T-cell (primary cell): ENCODE measurements at regions of chr3 and their contacts with region 1.

Region 1: DNA sequence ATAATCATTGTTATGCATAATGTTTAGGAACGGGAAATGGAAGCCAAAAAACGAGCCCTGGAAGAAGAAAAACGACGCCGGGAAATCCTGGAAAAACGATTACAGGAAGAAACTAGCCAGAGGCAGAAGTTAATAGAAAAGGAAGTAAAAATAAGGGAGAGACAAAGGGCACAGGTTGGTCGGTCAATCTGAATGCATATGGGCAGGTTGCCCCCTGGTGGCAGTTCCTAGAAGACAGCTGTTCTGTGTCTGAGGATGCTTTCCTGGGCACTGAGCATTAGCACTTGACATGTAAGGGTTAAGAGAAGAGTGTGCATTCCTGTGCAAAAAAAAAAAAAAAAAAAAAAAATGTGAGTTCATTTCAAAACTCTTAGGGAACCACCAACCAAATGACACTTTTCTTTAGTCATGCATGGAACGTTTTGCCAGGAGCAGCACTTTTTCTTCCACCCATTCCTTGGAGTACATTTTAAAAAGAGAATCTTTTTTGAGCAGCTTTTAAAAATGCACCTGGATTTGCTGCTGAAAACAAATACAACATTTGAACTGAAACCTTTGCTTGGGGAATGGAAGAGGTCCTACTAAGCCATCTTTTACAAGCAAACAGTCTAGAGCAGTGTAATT is 11.1 kb upstream of the ABHD10 start:
- DNase-seq: peak; percentile 38 to 87 (median 68)
- ATAC-seq: peak; percentile 75 to 85 (median 82)
- H3K4me3 ChIP-seq: no peak overlapping the region
- H3K4me3 Mint-ChIP-seq: no peak overlapping the region
- H3K27ac ChIP-seq: no peak overlapping the region
- H3K27ac Mint-ChIP-seq: no peak overlapping the region
- H3K4me1 ChIP-seq: no peaks in the 10 kb centered on the region
- H3K4me1 Mint-ChIP-seq: peaks cover 3 to 11% (median 10%) of the 10 kb centered on the region in 3 donors
- H3K27me3 ChIP-seq: no peaks in the 10 kb centered on the region
- H3K27me3 Mint-ChIP-seq: no peaks in the 10 kb centered on the region

Region 2: DNA sequence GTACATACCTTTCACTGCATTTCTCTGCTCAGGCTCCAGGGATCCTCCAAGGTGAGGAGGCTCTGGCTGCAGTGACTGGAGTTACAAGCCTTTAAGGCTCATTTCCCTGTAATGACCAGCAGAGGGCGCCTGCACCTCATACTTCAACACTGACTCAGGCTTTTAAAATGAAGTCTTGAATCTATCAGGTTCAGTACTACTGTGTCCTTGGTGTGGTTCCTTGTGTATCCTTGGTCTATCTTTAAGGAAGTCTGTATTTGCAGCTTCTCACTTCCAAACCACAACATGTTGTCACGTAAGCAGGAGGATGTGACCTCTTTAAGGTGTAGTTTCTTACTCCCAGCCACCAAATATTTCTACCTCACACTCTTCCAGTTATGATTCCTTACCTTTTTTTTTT is 250.2 kb before region 1 on chr3:
- CTCF ChIA-PET with region 1: interaction called, 73 to 149 read pairs
- POLR2A ChIA-PET with region 1: interaction called in 1 of 2 experiments, 3 read pairs
- DNase-seq: peak; percentile 39 to 84 (median 56)
- ATAC-seq: peak; percentile 87 to 89 (median 88)
- H3K4me3 ChIP-seq: no peak overlapping the region
- H3K4me3 Mint-ChIP-seq: no peak overlapping the region
- H3K27ac ChIP-seq: no peak overlapping the region
- H3K27ac Mint-ChIP-seq: peak overlapping the region; percentile 36 to 85
- H3K4me1 ChIP-seq: peaks cover 0 to 4% of the 10 kb centered on the region in 2 experiments
- H3K4me1 Mint-ChIP-seq: peaks cover 0 to 10% (median 4%) of the 10 kb centered on the region in 3 donors
- H3K27me3 ChIP-seq: no peaks in the 10 kb centered on the region
- H3K27me3 Mint-ChIP-seq: no peaks in the 10 kb centered on the region

Region 3: GRCh38 chr3:111781561-111782446 is 186.0 kb before region 1 on chr3:
- CTCF ChIA-PET with region 1: interaction called in 1 of 2 experiments, 10 read pairs
- POLR2A ChIA-PET with region 1: no interaction called
- DNase-seq: no peak
- ATAC-seq: no peak
- H3K4me3 ChIP-seq: no peak overlapping the region
- H3K4me3 Mint-ChIP-seq: no peak overlapping the region
- H3K27ac ChIP-seq: no peak overlapping the region
- H3K27ac Mint-ChIP-seq: no peak overlapping the region
- H3K4me1 ChIP-seq: no peaks in the 10 kb centered on the region
- H3K4me1 Mint-ChIP-seq: no peaks in the 10 kb centered on the region
- H3K27me3 ChIP-seq: no peaks in the 10 kb centered on the region
- H3K27me3 Mint-ChIP-seq: no peaks in the 10 kb centered on the region

Region 4: GRCh38 chr3:111859974-111860859 is 107.5 kb before region 1 on chr3:
- CTCF ChIA-PET with region 1: interaction called, 8 to 11 read pairs
- POLR2A ChIA-PET with region 1: no interaction called
- DNase-seq: peak; percentile 14 to 77 (median 36)
- ATAC-seq: peak; percentile 60 to 65 (median 64)
- H3K4me3 ChIP-seq: peak overlapping the region; percentile 67 to 95
- H3K4me3 Mint-ChIP-seq: peak overlapping the region; percentile 87 to 92 (median 91)
- H3K27ac ChIP-seq: peak overlapping the region; percentile 57
- H3K27ac Mint-ChIP-seq: peak overlapping the region; percentile 25 to 87
- H3K4me1 ChIP-seq: peaks cover 7 to 15% of the 10 kb centered on the region in 2 experiments
- H3K4me1 Mint-ChIP-seq: peaks cover 16 to 20% (median 19%) of the 10 kb centered on the region in 3 donors
- H3K27me3 ChIP-seq: peaks cover 2 to 12% of the 10 kb centered on the region in 2 experiments
- H3K27me3 Mint-ChIP-seq: peaks cover 20 to 25% of the 10 kb centered on the region in 2 donors

Region 5: DNA sequence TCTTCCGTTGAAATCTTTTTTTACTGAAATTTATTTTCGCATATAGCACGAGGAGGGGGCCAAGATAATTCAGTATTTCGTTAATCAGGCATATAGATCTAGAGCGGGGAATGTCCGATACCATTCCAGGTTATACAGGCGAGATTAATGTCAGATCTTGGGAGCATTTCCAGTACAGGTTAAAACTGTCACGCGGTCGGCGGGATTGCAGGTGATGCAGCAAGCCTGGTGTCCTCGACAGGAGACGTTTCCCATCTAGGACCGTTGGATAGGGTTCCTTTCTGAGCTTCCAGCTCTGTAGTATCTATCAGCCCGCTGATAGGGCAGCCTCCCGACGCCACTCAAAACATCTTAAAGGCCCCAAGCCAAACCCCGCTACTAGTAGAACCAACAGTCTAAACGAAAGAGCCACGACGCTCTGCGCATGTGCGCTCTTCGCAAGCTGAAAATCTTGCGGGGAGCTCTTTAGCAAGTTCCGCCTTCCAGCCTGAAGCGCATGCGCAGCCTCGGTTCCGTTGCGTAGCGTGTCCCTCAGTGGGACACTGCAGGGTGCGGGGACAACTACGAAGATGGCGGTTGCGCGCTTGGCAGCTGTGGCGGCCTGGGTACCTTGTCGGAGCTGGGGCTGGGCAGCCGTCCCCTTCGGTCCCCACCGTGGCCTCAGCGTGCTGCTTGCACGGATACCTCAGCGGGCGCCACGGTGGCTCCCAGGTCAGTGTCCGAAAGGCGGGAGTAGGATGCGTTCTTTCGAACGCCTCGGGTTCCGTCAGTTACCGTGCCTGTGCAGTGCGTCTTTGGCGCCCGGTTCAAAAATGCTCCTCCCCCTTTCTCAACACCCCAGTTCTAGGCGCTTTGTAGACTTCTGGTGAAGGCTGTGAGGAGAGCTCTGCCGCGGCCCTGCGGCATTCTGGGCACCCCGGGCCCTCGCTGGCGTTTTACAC is 11.0 kb after region 1 on chr3 and contains the start of gene ABHD10:
- CTCF ChIA-PET with region 1: interaction called, 3 to 22 read pairs
- POLR2A ChIA-PET with region 1: no interaction called
- DNase-seq: peak; percentile 88 to 100 (median 96)
- ATAC-seq: peak; percentile 96 to 97 (median 96)
- H3K4me3 ChIP-seq: peak within 1 kb of the TSS; percentile 73 to 96
- H3K4me3 Mint-ChIP-seq: peak within 1 kb of the TSS; percentile 91 to 94 (median 92)
- H3K27ac ChIP-seq: peak within 1 kb of the TSS; percentile 74
- H3K27ac Mint-ChIP-seq: peak within 1 kb of the TSS; percentile 89 to 92
- H3K4me1 ChIP-seq: peaks cover 9 to 10% of the 10 kb centered on the region in 2 experiments
- H3K4me1 Mint-ChIP-seq: peaks cover 46 to 48% (median 46%) of the 10 kb centered on the region in 3 donors
- H3K27me3 ChIP-seq: no peaks in the 10 kb centered on the region
- H3K27me3 Mint-ChIP-seq: no peaks in the 10 kb centered on the region
- total RNA-seq, gene ABHD10: 18.3 to 31.8 (median 28.1) TPM

Region 6: DNA sequence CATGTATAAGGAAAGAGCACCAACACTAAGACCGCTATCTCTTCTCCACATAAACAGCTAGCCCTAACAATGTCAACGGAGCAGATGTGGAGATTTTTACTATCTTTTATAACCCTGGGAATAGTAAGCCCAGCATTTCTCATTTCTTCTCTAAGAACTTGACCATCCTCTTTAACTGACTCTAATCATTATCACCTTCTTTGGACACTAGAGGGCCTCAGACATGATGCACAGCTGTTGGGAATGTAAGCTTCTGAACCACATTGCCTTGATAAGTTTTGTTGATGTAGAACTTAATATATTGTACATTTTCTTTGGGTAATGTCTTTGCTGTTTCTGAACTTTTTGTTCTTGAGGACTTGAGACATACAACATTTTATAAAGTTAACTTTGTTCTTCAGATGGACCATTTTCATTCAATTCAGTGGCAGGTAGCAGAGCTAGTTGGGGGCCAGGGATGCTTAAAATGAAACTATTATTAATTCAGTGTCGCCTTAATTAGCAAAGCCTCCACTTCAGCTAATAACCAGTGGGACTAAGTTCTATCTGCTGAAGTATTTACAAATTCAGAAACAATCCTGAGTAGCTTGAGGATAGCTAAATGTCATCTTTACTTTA is 21.4 kb after region 1 on chr3:
- CTCF ChIA-PET with region 1: interaction called, 3 to 12 read pairs
- POLR2A ChIA-PET with region 1: no interaction called
- DNase-seq: peak in 1 of 35 experiments; percentile 61
- ATAC-seq: peak; percentile 57 to 79 (median 72)
- H3K4me3 ChIP-seq: no peak overlapping the region
- H3K4me3 Mint-ChIP-seq: no peak overlapping the region
- H3K27ac ChIP-seq: no peak overlapping the region
- H3K27ac Mint-ChIP-seq: no peak overlapping the region
- H3K4me1 ChIP-seq: peaks cover 0 to 9% of the 10 kb centered on the region in 2 experiments
- H3K4me1 Mint-ChIP-seq: peaks cover 31 to 36% (median 33%) of the 10 kb centered on the region in 3 donors
- H3K27me3 ChIP-seq: no peaks in the 10 kb centered on the region
- H3K27me3 Mint-ChIP-seq: no peaks in the 10 kb centered on the region